Astrocyte of the cerebellum (primary cell): ENCODE measurements at regions of chr5 and their contacts with region 1.

Region 1: GRCh38 chr5:88979726-88980125 is 96.7 kb upstream of the MEF2C start:
- DNase-seq: no peak
- H3K4me3 ChIP-seq: no peak overlapping the region
- CTCF ChIP-seq: no peak

Region 2: DNA sequence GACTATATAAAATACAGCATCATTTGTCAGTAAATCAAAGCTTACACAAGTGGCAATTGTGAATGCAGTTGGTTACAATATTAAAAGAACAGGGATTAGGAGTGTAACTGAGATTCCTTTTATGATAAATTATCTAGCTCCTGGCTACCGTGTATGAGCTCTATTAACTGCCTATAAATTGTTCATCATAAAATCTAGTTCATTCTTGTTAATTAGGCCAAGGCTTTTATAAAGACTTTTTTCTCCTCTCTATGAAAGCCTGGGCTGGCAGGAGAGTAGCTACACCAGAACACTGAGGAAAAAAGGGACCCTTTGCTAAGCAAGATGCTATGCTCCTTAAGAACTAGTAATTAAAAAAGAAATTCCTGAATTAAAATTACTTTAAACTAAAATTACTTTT is 35.7 kb after region 1 on chr5:
- in situ Hi-C with region 1: loop called (anchors 5 kb)
- DNase-seq: no peak
- H3K4me3 ChIP-seq: no peak overlapping the region
- CTCF ChIP-seq: no peak